Panc1 (cell line): ENCODE measurements at regions of chr1 and their contacts with region 1.

Region 1: DNA sequence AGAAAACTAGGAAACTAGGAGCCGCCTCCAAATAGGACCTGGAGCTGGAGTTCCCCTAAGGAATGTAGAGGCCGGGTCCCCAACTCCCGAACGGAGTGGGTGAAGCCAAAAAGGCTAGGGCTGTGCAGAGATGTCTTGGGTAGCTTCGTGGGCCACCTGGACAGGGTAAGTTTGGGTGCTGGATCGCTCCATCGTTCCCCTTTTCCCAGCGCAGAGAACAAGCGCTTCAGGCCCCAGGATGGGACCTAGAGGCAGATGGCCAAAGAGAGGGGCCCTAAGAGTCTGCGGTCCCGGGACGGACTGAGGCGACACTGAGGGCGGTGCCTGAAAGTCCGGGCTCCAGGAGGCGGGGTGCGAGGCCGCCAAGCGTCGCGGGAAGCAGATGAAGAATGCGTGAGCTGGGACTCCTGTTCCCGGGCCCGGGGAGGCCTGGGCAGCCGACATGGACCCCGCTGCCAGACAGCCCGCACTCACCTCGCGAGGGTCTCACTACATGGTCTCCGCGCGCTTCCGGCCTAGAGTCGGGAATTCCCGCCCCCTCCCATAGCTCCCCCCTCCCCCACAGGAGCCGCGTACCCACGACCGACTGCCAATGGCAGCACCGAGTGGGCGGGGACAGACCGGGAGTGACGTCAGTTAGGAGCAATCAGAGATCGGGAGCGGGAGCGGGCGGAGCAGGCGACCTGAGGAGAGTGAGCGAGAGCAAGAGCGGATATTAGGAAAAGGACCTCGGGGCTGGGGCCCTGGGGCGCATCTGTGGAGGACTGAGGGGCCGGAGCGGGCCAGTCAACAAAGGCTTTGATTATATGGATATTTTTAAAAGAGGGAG is at the start of gene SLC39A1:
- DNase-seq: peak; percentile 95
- ATAC-seq: peak; percentile 85
- H3K4me3 ChIP-seq: peak within 1 kb of the TSS; percentile 60 to 95
- H3K27ac ChIP-seq: peak within 1 kb of the TSS; percentile 94
- H3K4me1 ChIP-seq: peaks cover 26% of the 10 kb centered on the region
- H3K27me3 ChIP-seq: no peaks in the 10 kb centered on the region
- CTCF ChIP-seq: no peak
- total RNA-seq, gene SLC39A1: 158 TPM

Region 2: GRCh38 chr1:153404768-153405167 is 558.5 kb before region 1 on chr1:
- CTCF ChIA-PET with region 1: no interaction called
- POLR2A ChIA-PET with region 1: no interaction called
- in situ Hi-C with region 1: no loop called
- intact Hi-C with region 1: no loop called
- DNase-seq: peak; percentile 8
- ATAC-seq: peak; percentile 74; the same call in 1 of the 2 replicates
- H3K4me3 ChIP-seq: no peak overlapping the region
- H3K27ac ChIP-seq: no peak overlapping the region
- H3K4me1 ChIP-seq: no peaks in the 10 kb centered on the region
- H3K27me3 ChIP-seq: peaks cover 20% of the 10 kb centered on the region
- CTCF ChIP-seq: peak; percentile 84

Region 3: DNA sequence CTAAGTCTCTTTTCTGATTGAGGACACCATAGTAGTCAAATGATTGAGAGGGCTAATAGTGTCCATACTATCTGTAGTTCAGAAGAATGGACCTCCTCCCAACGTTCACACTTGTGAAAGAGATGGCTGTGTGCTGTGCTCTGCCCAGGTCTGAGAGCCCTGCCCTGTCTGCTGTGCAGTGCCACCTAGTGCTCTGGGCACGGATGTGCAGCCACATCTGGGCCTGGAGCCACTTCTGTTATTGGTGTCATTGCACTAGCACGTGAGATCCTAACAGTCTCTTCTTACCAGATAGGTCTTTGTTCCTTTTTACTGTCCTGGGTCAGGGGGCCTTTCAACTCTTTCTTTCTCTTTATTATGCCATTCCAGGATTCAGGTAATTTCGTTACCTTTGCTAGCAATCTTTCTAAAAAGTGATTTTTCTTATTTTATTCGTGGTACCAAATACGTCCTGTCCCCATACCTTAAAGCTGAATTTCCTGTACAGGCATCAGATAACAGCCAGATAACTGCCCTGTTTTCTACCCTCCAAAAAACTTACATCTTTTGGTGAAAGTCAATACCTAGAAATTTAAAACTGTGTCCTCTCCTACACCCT is 213.7 kb before region 1 on chr1:
- CTCF ChIA-PET with region 1: no interaction called
- POLR2A ChIA-PET with region 1: no interaction called
- in situ Hi-C with region 1: no loop called
- intact Hi-C with region 1: no loop called
- DNase-seq: peak; percentile 67
- ATAC-seq: peak; percentile 99
- H3K4me3 ChIP-seq: no peak overlapping the region
- H3K27ac ChIP-seq: no peak overlapping the region
- H3K4me1 ChIP-seq: no peaks in the 10 kb centered on the region
- H3K27me3 ChIP-seq: no peaks in the 10 kb centered on the region
- CTCF ChIP-seq: peak; percentile 96

Region 4: GRCh38 chr1:153866045-153866850 is 97.0 kb before region 1 on chr1:
- CTCF ChIA-PET with region 1: no interaction called
- POLR2A ChIA-PET with region 1: no interaction called
- in situ Hi-C with region 1: no loop called
- intact Hi-C with region 1: no loop called
- DNase-seq: no peak
- ATAC-seq: no peak
- H3K4me3 ChIP-seq: no peak overlapping the region
- H3K27ac ChIP-seq: no peak overlapping the region
- H3K4me1 ChIP-seq: no peaks in the 10 kb centered on the region
- H3K27me3 ChIP-seq: no peaks in the 10 kb centered on the region
- CTCF ChIP-seq: no peak

Region 5: DNA sequence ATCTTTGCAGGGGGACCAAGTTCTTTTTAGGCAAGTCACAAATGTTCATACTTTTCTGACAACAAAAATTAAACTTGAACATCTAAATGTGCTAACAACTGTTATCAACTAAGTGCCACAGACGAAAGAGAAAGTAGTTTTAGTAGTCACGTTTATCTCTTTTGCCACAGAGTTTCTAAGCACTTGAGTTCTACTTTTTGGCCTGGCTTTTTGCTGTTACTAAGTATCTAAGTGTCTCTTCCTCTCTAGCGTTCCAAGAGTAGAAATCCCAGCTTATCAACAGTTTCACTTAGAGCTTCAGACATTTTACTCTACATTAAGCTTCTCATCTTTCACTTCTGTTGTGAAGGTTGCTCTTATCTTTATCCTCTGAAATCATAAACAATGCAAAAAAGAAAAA is 74.7 kb before region 1 on chr1:
- CTCF ChIA-PET with region 1: no interaction called
- POLR2A ChIA-PET with region 1: no interaction called
- in situ Hi-C with region 1: loop called (anchors 5 kb)
- intact Hi-C with region 1: no loop called
- DNase-seq: no peak
- ATAC-seq: no peak
- H3K4me3 ChIP-seq: no peak overlapping the region
- H3K27ac ChIP-seq: no peak overlapping the region
- H3K4me1 ChIP-seq: 0 out of 2 replicates have a peak, but pooled peaks cover 3% of the 10 kb centered on the region
- H3K27me3 ChIP-seq: no peaks in the 10 kb centered on the region
- CTCF ChIP-seq: no peak